ENCODE measurements at regions of chr10 and their contacts with region 1.

Region 1: DNA sequence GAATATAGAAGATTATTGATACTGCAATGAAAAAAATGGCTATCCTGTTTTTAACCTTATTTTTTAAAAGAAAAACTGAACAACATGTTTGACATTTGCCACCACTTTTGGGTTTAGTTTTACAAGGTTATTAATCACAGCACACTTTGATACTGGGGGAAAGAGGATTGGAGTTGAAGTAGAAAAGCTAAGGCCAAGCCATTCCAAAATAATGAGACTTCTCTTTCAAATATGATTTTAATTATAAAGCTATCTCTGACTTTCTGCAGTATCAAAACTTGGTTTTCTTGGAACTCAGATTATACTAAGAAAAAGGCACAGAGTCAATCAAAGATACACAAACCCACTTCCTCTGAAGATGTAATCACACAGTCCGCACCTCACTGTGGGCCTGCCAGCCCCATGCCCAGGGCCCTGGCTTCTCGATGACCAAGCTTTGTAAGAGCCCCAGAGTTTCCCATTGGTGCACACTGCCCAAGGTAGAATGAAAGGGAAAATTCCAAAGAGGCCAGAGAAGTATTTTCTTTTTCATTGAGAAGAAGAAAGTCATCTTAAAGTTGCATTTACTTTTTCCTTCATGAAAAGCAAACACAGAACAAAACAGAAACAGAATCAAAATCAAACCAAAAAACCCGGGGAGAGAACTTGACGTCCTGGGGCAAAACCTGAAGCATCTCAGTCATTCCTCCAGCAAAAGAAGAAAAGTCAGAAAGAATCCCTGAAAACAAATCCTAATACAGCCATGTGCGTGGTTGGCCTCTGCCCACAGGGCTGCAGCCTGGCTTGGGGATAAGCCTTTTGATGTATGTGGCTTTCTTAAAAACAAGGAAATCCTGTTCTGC is 187.7 kb upstream of the KLF6 start:
- DNase-seq: peak in 7 of 9 donors; percentile 8 to 47 (median 35)
- ATAC-seq: peak; percentile 89
- H3K4me3 ChIP-seq: peak overlapping the region; percentile 36
- H3K4me3 Mint-ChIP-seq: peak overlapping the region; percentile 63 to 89 (median 82)
- H3K27ac ChIP-seq: peak overlapping the region; percentile 66
- H3K27ac Mint-ChIP-seq: peak overlapping the region; percentile 86 to 98 (median 96)
- H3K4me1 ChIP-seq: peaks cover 56 to 71% of the 10 kb centered on the region in 2 donors
- H3K4me1 Mint-ChIP-seq: peaks cover 38 to 61% (median 54%) of the 10 kb centered on the region in 7 donors
- H3K27me3 ChIP-seq: no peaks in the 10 kb centered on the region
- H3K27me3 Mint-ChIP-seq: no peaks in the 10 kb centered on the region

Region 2: DNA sequence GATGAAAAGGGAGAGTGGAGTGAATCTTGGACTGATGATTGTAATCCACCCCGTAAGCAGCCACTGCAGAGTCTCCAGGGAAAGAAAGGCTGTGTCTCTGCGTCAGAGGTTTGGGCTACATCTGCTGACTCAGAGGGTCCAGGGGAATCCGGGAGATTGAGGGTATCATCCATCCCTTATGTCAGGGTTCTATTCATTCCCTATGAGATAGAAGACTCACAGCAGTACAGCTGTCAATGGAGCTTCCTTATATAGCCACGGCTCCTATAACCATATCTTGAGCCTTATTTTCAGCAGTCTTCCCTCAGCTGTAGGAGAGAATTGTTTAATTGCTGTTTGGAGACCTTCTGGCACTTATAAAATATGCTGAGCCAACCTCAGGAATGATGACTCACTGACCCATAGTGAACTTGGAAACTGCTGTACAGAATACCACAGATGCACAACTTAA is 1463.6 kb before region 1 on chr10:
- CTCF ChIA-PET with region 1: no interaction called
- POLR2A ChIA-PET with region 1: no interaction called
- intact Hi-C with region 1: no loop called
- DNase-seq: no peak
- ATAC-seq: no peak
- H3K4me3 ChIP-seq: no peak overlapping the region
- H3K4me3 Mint-ChIP-seq: no peak overlapping the region
- H3K27ac ChIP-seq: no peak overlapping the region
- H3K27ac Mint-ChIP-seq: no peak overlapping the region
- H3K4me1 ChIP-seq: no peaks in the 10 kb centered on the region
- H3K4me1 Mint-ChIP-seq: no peaks in the 10 kb centered on the region
- H3K27me3 ChIP-seq: no peaks in the 10 kb centered on the region
- H3K27me3 Mint-ChIP-seq: peaks cover 0 to 27% (median 13%) of the 10 kb centered on the region in 5 donors

Region 3: GRCh38 chr10:3452173-3452626 is 520.5 kb before region 1 on chr10:
- CTCF ChIA-PET with region 1: no interaction called
- POLR2A ChIA-PET with region 1: no interaction called
- intact Hi-C with region 1: loop called in 1 of 2 experiments (anchors 10 kb)
- DNase-seq: peak in 6 of 9 donors; percentile 18 to 56 (median 24)
- ATAC-seq: no peak
- H3K4me3 ChIP-seq: no peak overlapping the region
- H3K4me3 Mint-ChIP-seq: peak overlapping the region in 1 of 10 donors; percentile 57
- H3K27ac ChIP-seq: peak overlapping the region; percentile 51
- H3K27ac Mint-ChIP-seq: peak overlapping the region in 8 of 9 donors; percentile 16 to 88 (median 78)
- H3K4me1 ChIP-seq: peaks cover 0 to 38% of the 10 kb centered on the region in 2 donors
- H3K4me1 Mint-ChIP-seq: peaks cover 7 to 48% (median 36%) of the 10 kb centered on the region in 7 donors
- H3K27me3 ChIP-seq: peaks cover 0 to 6% of the 10 kb centered on the region in 2 donors
- H3K27me3 Mint-ChIP-seq: peaks cover 0 to 32% (median 0%) of the 10 kb centered on the region in 5 donors

Region 4: GRCh38 chr10:3805791-3806461 is 166.8 kb before region 1 on chr10:
- CTCF ChIA-PET with region 1: no interaction called
- POLR2A ChIA-PET with region 1: interaction called, 5 read pairs
- intact Hi-C with region 1: loop called (anchors 1 to 2 kb)
- DNase-seq: peak in 3 of 9 donors; percentile 13 to 53 (median 31)
- ATAC-seq: no peak
- H3K4me3 ChIP-seq: peak overlapping the region; percentile 38
- H3K4me3 Mint-ChIP-seq: peak overlapping the region; percentile 14 to 86 (median 70)
- H3K27ac ChIP-seq: peak overlapping the region; percentile 82
- H3K27ac Mint-ChIP-seq: peak overlapping the region in 3 of 9 donors; percentile 97 to 99 (median 99)
- H3K4me1 ChIP-seq: peaks cover 70 to 83% of the 10 kb centered on the region in 2 donors
- H3K4me1 Mint-ChIP-seq: peaks cover 43 to 81% (median 74%) of the 10 kb centered on the region in 7 donors
- H3K27me3 ChIP-seq: no peaks in the 10 kb centered on the region
- H3K27me3 Mint-ChIP-seq: no peaks in the 10 kb centered on the region

Region 5: DNA sequence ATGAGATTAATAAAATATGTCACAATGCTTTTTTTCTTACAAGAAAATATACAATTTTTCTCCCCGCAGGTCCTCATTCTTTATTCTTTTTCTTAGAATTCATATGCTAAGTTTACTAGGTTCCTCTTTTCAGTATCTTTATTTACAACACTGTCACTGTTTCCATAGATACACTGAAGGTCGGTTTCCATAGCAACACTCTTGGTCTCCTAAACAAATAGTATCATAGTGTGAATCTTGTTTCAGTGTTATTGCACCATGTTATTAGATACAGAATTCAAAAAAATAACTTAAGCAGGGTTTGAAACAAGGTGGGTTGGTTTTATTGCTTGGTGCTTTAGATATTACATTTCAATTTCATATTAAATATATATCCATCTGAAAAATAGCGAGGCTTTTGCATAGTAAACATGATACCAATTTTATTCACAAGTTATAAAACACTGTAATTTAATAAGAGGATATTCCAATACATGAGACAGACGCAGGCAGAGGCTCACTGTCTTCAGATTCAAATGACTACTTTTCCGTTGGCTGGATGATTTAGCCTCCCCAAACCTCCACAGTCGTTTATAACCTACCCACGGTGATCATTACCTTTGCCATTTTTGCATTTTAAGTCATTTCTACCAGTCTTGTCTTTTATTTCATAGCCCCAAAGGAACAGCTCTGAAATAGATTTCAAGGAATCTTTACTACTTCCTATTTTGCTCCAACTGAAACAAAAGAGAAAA is 98.8 kb before region 1 on chr10:
- CTCF ChIA-PET with region 1: no interaction called
- POLR2A ChIA-PET with region 1: no interaction called
- intact Hi-C with region 1: loop called in 1 of 2 experiments (anchors 1 kb)
- DNase-seq: peak in 8 of 9 donors; percentile 8 to 85 (median 74)
- ATAC-seq: peak; percentile 77
- H3K4me3 ChIP-seq: no peak overlapping the region
- H3K4me3 Mint-ChIP-seq: peak overlapping the region in 7 of 10 donors; percentile 14 to 73 (median 46)
- H3K27ac ChIP-seq: peak overlapping the region; percentile 65
- H3K27ac Mint-ChIP-seq: peak overlapping the region; percentile 87 to 95 (median 91)
- H3K4me1 ChIP-seq: peaks cover 41 to 51% of the 10 kb centered on the region in 2 donors
- H3K4me1 Mint-ChIP-seq: peaks cover 30 to 59% (median 57%) of the 10 kb centered on the region in 7 donors
- H3K27me3 ChIP-seq: no peaks in the 10 kb centered on the region
- H3K27me3 Mint-ChIP-seq: no peaks in the 10 kb centered on the region

Region 6: GRCh38 chr10:3961082-3961481 is 11.6 kb before region 1 on chr10:
- CTCF ChIA-PET with region 1: no interaction called
- POLR2A ChIA-PET with region 1: interaction called, 9 read pairs
- intact Hi-C with region 1: loop called (anchors 1 kb)
- DNase-seq: peak in 6 of 9 donors; percentile 32 to 55 (median 40)
- ATAC-seq: peak; percentile 92
- H3K4me3 ChIP-seq: no peak overlapping the region
- H3K4me3 Mint-ChIP-seq: peak overlapping the region in 6 of 10 donors; percentile 8 to 70 (median 28)
- H3K27ac ChIP-seq: no peak overlapping the region
- H3K27ac Mint-ChIP-seq: peak overlapping the region in 8 of 9 donors; percentile 10 to 84 (median 50)
- H3K4me1 ChIP-seq: peaks cover 12 to 33% of the 10 kb centered on the region in 2 donors
- H3K4me1 Mint-ChIP-seq: peaks cover 12 to 43% (median 18%) of the 10 kb centered on the region in 7 donors
- H3K27me3 ChIP-seq: no peaks in the 10 kb centered on the region
- H3K27me3 Mint-ChIP-seq: no peaks in the 10 kb centered on the region

Region 7: DNA sequence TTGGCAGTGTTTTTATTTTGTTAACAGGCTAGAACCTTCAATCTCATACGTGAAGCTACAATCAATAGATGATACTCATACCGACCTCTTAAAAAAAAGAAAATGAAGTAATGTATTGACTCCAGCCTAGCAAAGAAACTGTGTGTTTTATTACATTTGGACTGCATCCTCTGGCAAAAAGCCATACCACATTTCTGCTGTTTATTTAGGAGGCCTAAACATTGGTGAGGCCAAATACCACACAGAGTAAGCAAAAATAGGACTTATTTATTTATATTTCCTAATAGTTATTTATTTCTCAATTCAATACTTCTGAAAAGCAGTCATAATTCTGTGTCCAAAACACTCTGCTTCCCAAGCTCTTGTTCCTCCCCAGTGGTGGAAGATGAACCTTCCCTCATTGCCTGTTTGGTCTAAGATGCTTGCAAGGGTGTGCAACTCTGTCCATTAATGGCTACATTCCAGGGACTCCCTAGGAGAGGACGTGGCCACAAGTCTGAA is 211.1 kb after region 1 on chr10:
- CTCF ChIA-PET with region 1: no interaction called
- POLR2A ChIA-PET with region 1: no interaction called
- intact Hi-C with region 1: loop called in 1 of 2 experiments (anchors 5 kb)
- DNase-seq: no peak
- ATAC-seq: no peak
- H3K4me3 ChIP-seq: no peak overlapping the region
- H3K4me3 Mint-ChIP-seq: no peak overlapping the region
- H3K27ac ChIP-seq: no peak overlapping the region
- H3K27ac Mint-ChIP-seq: no peak overlapping the region
- H3K4me1 ChIP-seq: no peaks in the 10 kb centered on the region
- H3K4me1 Mint-ChIP-seq: peaks cover 0 to 32% (median 3%) of the 10 kb centered on the region in 7 donors
- H3K27me3 ChIP-seq: no peaks in the 10 kb centered on the region
- H3K27me3 Mint-ChIP-seq: no peaks in the 10 kb centered on the region

Region 8: DNA sequence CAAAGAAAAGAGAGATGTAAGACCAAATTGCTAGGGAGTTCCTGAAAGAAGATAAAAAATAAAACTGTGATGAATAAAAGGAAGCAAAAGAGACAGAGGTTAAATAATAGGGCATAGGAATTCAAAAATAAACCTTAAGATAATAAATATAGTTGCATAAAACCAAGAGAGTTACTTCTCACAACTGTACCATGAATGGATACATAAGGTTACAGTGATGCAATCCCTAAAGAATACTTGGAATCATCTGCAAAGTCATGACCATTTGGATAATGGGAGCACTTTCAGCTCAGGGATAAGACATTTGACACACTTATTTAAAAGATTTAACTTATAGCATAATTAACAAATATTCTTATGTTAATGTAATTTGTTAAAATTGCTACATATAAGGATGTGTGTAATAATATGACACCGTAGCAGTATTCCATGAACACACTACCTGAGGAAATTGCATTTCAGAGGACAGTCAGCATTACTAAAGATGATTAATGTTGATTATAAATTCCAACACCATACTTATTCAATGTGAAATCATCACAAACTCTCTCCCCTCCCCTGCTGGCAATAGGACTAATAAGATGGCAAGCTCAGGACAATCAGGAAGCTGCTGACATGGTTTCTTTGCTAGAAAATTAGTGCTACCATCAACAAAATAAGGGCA is 651.2 kb after region 1 on chr10:
- CTCF ChIA-PET with region 1: no interaction called
- POLR2A ChIA-PET with region 1: no interaction called
- intact Hi-C with region 1: no loop called
- DNase-seq: no peak
- ATAC-seq: no peak
- H3K4me3 ChIP-seq: no peak overlapping the region
- H3K4me3 Mint-ChIP-seq: no peak overlapping the region
- H3K27ac ChIP-seq: no peak overlapping the region
- H3K27ac Mint-ChIP-seq: no peak overlapping the region
- H3K4me1 ChIP-seq: no peaks in the 10 kb centered on the region
- H3K4me1 Mint-ChIP-seq: no peaks in the 10 kb centered on the region
- H3K27me3 ChIP-seq: no peaks in the 10 kb centered on the region
- H3K27me3 Mint-ChIP-seq: peaks cover 0 to 24% (median 18%) of the 10 kb centered on the region in 5 donors

Measured in naive thymus-derived CD4-positive, alpha-beta T cell (primary cell).